Aorta (tissue), 5 donors: ENCODE measurements at regions of chr3 and their contacts with region 1.

Region 1: GRCh38 chr3:79032686-79033318 is 735.0 kb downstream of the ROBO1 start:
- DNase-seq: no peak
- ATAC-seq: peak; percentile 82
- H3K4me3 ChIP-seq: no peak overlapping the region
- H3K27ac ChIP-seq: no peak overlapping the region
- H3K4me1 ChIP-seq: no peaks in the 10 kb centered on the region
- H3K27me3 ChIP-seq: no peaks in the 10 kb centered on the region

Region 2: GRCh38 chr3:78660957-78661356 is 371.8 kb before region 1 on chr3:
- intact Hi-C with region 1: loop called (anchors 2 to 5 kb)
- DNase-seq: no peak
- ATAC-seq: no peak
- H3K4me3 ChIP-seq: no peak overlapping the region
- H3K27ac ChIP-seq: no peak overlapping the region
- H3K4me1 ChIP-seq: no peaks in the 10 kb centered on the region
- H3K27me3 ChIP-seq: no peaks in the 10 kb centered on the region

Region 3: DNA sequence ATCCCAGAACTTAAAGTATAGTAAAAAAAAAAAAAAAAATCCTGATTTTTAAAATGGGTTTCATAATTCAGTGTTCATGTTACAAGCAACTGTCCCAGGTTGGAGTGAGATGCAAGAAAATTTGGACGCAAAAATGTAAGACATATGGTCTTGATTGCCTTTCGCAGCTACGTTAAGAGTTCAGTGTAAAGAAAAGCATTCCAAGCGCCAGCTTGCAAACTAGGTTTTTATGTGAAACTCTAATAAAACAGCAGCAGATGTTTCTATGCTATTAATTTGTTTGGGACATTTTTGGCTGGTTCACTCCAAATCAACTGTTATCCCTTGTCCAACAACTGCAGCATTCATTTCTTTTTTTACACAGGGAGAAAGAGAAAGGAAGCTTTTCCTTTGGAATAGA is 222.8 kb before region 1 on chr3:
- intact Hi-C with region 1: no loop called
- DNase-seq: no peak
- ATAC-seq: no peak
- H3K4me3 ChIP-seq: no peak overlapping the region
- H3K27ac ChIP-seq: no peak overlapping the region
- H3K4me1 ChIP-seq: peaks cover 0 to 1% of the 10 kb centered on the region in 2 donors
- H3K27me3 ChIP-seq: no peaks in the 10 kb centered on the region

Region 4: GRCh38 chr3:78839693-78840092 is 193.1 kb before region 1 on chr3:
- intact Hi-C with region 1: no loop called
- DNase-seq: no peak
- ATAC-seq: no peak
- H3K4me3 ChIP-seq: no peak overlapping the region
- H3K27ac ChIP-seq: no peak overlapping the region
- H3K4me1 ChIP-seq: no peaks in the 10 kb centered on the region
- H3K27me3 ChIP-seq: no peaks in the 10 kb centered on the region